ENCODE measurements at regions of chr4 and their contacts with region 1.

Region 1: GRCh38 chr4:105146276-105147015 is at the start of gene TET2:
- DNase-seq: peak; percentile 83 to 85
- H3K4me3 ChIP-seq: peak within 1 kb of the TSS; percentile 81 to 92
- H3K27ac ChIP-seq: peak within 1 kb of the TSS; percentile 88 to 93
- H3K4me1 ChIP-seq: peaks cover 0 to 31% (median 9%) of the 10 kb centered on the region in 4 donors
- H3K27me3 ChIP-seq: no peaks in the 10 kb centered on the region
- CTCF ChIP-seq: no peak

Region 2: GRCh38 chr4:105473324-105474098 is 327.1 kb after region 1 on chr4 and contains the start of gene PPA2:
- intact Hi-C with region 1: loop called (anchors 1 kb)
- DNase-seq: peak; percentile 93 to 95
- H3K4me3 ChIP-seq: peak within 1 kb of the TSS; percentile 88 to 94
- H3K27ac ChIP-seq: peak within 1 kb of the TSS; percentile 98
- H3K4me1 ChIP-seq: peaks cover 0 to 20% (median 15%) of the 10 kb centered on the region in 4 donors
- H3K27me3 ChIP-seq: no peaks in the 10 kb centered on the region
- CTCF ChIP-seq: no peak

Measured in tibial artery (tissue), 4 donors.